Stomach (tissue), 19 donors: ENCODE measurements at regions of chr10 and their contacts with region 1.

Region 1: DNA sequence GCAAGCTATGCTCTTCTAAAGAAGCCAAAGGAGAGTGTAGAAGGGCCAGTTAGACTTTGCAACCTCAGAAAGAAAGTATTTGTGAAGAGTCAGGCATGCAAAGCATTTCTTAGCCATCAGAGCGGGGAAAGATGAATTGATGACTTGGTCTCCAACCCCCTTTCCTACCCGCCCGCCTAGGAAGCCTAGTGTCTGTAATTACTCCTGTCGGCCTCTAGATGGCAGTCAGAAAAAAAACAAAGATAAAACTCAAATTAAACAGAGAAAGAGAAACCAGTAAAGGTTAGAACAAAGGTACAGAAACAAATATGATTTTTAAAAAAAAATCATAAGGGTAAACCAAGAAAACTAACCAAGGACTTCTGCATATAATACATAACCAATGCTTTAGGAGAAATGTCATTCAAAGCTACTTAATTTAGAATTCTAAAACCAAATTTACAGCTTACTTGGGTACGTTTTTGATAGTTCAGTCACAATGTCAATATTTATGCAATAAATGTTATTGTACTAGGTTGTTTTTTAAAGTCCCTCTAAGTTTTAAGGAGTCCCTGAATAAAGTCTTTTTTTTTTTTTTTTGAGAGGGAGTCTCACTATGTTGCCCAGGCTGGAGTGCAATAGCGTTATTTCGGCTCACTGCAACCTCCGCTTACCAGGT is 97.6 kb downstream of the LYZL1 start:
- DNase-seq: peak in 1 of 2 donors; percentile 62
- H3K4me3 ChIP-seq: no peak overlapping the region
- H3K27ac ChIP-seq: no peak overlapping the region
- H3K4me1 ChIP-seq: peaks cover 0 to 7% (median 3%) of the 10 kb centered on the region in 4 donors
- H3K27me3 ChIP-seq: no peaks in the 10 kb centered on the region
- CTCF ChIP-seq: peak in 5 of 7 experiments; percentile 60 to 84 (median 76)
- EP300 ChIP-seq: no peak
- POLR2A ChIP-seq: no peak

Region 2: DNA sequence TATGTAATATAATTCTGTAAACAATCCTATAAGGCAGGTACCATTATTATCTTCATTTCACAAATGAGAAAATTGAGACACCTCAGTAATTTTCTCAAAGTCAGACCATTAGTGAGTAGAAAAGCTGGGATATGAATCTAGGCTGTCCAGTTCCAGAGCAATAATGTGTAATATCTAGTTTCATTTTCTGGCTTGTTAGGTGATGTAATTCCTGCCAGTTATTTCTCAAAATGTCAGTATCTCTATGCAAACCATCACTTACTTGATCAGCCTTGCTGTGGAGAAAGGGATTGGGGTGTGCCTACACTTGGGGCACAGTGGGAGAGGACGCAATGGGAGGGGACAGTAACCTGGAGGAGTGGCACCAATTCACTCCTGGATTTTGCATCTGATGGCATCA is 59.9 kb after region 1 on chr10:
- intact Hi-C with region 1: loop called (anchors 5 kb)
- DNase-seq: no peak
- H3K4me3 ChIP-seq: no peak overlapping the region
- H3K27ac ChIP-seq: no peak overlapping the region
- H3K4me1 ChIP-seq: peaks cover 0 to 32% (median 17%) of the 10 kb centered on the region in 4 donors
- H3K27me3 ChIP-seq: no peaks in the 10 kb centered on the region
- CTCF ChIP-seq: no peak
- EP300 ChIP-seq: no peak
- POLR2A ChIP-seq: no peak